Dorsolateral prefrontal cortex (tissue), 120 donors: ENCODE measurements at regions of chr16 and their contacts with region 1.

Region 1: DNA sequence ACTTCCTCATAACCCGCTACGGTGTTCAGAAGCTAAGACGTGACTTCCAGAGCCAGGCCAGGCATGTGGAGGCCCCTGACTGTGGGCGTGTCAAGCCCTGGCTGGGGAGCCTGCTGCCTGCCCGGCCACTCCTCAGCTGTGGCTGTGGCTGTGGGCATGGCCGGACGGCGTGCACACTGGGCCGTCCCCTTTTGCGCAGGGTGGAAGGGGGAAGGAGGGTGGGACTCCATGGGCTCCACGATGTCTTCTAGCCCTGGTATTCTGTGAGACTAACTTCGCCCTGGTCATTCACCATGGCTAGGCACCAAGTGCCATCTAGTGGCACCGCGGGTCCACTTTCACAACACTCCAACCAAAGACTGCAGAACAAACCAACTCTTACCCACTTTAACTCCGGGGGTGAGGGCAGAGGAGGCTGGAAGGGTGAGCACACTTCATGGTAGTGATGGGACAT is 67.9 kb downstream of the N4BP1 start:
- DNase-seq: peak in 9 of 10 donors; percentile 53 to 80 (median 78)
- H3K4me3 ChIP-seq: no peak overlapping the region
- H3K27ac ChIP-seq: peak overlapping the region in 45 of 59 donors; percentile 3 to 72 (median 45)
- H3K27me3 ChIP-seq: no peaks in the 10 kb centered on the region
- CTCF ChIP-seq: peak; percentile 39 to 90 (median 78)

Region 2: GRCh38 chr16:48244080-48244862 is 297.8 kb before region 1 on chr16 and contains the start of gene LONP2:
- intact Hi-C with region 1: loop called in 1 of 2 experiments (anchors 5 kb)
- DNase-seq: peak; percentile 84 to 96 (median 92)
- H3K4me3 ChIP-seq: peak within 1 kb of the TSS; percentile 62 to 99 (median 93)
- H3K27ac ChIP-seq: peak within 1 kb of the TSS in 58 of 59 donors; percentile 34 to 95 (median 86)
- H3K27me3 ChIP-seq: no peaks in the 10 kb centered on the region
- CTCF ChIP-seq: peak in 33 of 56 donors; percentile 9 to 52 (median 32)
- total RNA-seq, gene LONP2: 68.2 to 129 (median 106) TPM

Region 3: DNA sequence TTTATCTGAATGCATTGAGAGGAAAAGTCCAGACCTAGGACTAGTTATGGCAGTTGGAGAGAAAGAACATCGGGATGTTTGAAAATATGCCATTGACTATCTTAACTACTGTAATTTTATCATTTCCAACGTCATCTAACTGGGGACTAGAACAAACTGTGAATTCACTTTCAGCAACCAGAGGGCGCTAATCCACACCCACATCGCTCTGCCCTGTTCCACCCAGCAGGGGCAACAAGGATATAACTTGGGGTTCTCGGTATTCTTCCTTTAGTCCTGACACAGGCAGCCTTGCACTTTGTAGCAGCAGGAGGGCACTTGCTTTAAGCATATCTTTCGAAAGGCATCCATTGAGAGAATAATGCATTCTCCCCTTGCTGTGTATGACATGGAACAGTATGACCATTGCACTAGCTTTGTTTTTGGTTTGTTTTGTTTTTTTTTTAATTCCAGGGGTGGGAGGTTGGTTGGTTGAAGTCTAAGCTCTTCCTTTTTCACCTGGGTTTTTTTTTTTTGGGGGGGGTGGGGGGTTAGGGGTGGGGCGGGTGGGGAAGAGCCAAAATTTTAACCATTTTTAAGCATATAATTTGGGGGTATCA is 188.4 kb before region 1 on chr16:
- intact Hi-C with region 1: loop called (anchors 1 to 5 kb)
- DNase-seq: peak in 3 of 10 donors; percentile 34 to 51 (median 43)
- H3K4me3 ChIP-seq: no peak overlapping the region
- H3K27ac ChIP-seq: peak overlapping the region in 27 of 59 donors; percentile 2 to 65 (median 33)
- H3K27me3 ChIP-seq: no peaks in the 10 kb centered on the region
- CTCF ChIP-seq: peak; percentile 51 to 92 (median 84)

Region 4: GRCh38 chr16:48462201-48462600 is 79.8 kb before region 1 on chr16:
- intact Hi-C with region 1: no loop called
- DNase-seq: no peak
- H3K4me3 ChIP-seq: no peak overlapping the region
- H3K27ac ChIP-seq: no peak overlapping the region
- H3K27me3 ChIP-seq: no peaks in the 10 kb centered on the region
- CTCF ChIP-seq: no peak